PC-9 (cell line): ENCODE measurements at regions of chr22 and their contacts with region 1.

Region 1: DNA sequence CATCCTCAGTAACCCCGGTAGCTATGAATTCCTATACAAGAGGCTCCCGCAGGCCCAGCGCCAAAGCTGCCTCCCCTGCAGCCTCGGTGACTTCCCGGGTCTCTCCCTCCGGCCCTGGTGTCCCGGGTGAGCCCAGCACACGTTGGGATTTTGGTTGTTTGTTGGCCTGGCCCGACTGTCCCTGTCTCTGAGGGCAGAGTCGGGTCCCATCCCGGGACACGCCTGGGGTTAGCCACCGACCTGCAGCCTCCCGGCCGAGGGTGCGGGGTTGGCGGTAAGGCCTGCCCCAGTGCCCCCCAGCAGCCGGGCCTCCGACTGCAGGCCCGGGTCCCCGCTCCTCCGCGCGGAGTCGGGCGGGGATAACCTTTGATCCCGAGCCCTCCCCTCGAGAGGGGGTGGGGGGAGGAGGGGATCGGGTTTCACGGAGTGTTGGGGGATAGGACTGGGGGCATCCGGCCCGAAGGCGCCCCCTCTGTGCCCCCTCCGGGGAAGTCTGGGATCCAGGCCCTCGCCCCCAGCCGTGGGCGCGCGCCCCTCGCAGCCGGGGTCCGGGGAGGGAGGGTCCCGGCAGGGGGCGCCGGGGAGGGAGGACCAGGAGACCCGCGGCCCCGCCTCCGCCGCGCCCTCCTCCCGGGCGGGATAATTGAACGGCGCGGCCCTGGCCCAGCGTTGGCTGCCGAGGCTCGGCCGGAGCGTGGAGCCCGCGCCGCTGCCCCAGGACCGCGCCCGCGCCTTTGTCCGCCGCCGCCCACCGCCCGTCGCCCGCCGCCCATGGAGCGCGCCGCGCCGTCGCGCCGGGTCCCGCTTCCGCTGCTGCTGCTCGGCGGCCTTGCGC is at the start of gene FBLN1:
- DNase-seq: peak; percentile 45 to 65
- H3K4me3 ChIP-seq: peak within 1 kb of the TSS; percentile 64
- H3K27ac ChIP-seq: peak within 1 kb of the TSS; percentile 33
- H3K4me1 ChIP-seq: peaks cover 51% of the 10 kb centered on the region
- H3K27me3 ChIP-seq: no peaks in the 10 kb centered on the region
- CTCF ChIP-seq: peak; percentile 52
- total RNA-seq, gene FBLN1: 158 and 167 TPM in 2 replicates

Region 2: DNA sequence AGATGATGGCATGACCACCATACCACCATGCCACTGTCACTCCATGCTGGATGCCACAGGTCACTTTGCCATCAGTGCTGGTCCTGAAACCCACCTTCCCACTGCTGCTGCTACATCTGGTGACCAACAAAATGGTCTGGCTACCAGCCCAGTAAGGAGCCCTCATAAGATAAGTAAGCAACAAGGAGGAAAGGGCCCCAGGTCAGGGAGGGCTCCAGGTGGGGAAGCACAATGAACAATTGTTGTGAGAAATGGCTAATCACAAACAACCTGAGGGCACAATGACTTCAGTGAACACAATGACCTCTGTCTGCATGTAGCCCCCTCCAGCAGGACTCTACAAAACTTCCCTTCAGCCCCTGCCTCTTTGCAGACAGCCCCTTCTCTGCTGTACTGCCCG is 19.2 kb before region 1 on chr22:
- CTCF ChIA-PET with region 1: interaction called, 14 read pairs
- POLR2A ChIA-PET with region 1: no interaction called
- intact Hi-C with region 1: no loop called
- DNase-seq: no peak
- H3K4me3 ChIP-seq: no peak overlapping the region
- H3K27ac ChIP-seq: peak overlapping the region; percentile 86
- H3K4me1 ChIP-seq: peaks cover 56% of the 10 kb centered on the region
- H3K27me3 ChIP-seq: no peaks in the 10 kb centered on the region
- CTCF ChIP-seq: no peak

Region 3: GRCh38 chr22:45516923-45517675 is 14.7 kb after region 1 on chr22:
- CTCF ChIA-PET with region 1: interaction called, 5 read pairs
- POLR2A ChIA-PET with region 1: interaction called, 4 read pairs
- intact Hi-C with region 1: loop called (anchors 1 kb)
- DNase-seq: peak; percentile 93 to 97
- H3K4me3 ChIP-seq: no peak overlapping the region
- H3K27ac ChIP-seq: peak overlapping the region; percentile 77
- H3K4me1 ChIP-seq: peaks cover 74% of the 10 kb centered on the region
- H3K27me3 ChIP-seq: no peaks in the 10 kb centered on the region
- CTCF ChIP-seq: no peak

Region 4: GRCh38 chr22:45527456-45527855 is 25.0 kb after region 1 on chr22:
- CTCF ChIA-PET with region 1: no interaction called
- POLR2A ChIA-PET with region 1: no interaction called
- intact Hi-C with region 1: no loop called
- DNase-seq: no peak
- H3K4me3 ChIP-seq: no peak overlapping the region
- H3K27ac ChIP-seq: no peak overlapping the region
- H3K4me1 ChIP-seq: no peaks in the 10 kb centered on the region
- H3K27me3 ChIP-seq: no peaks in the 10 kb centered on the region
- CTCF ChIP-seq: no peak

Region 5: DNA sequence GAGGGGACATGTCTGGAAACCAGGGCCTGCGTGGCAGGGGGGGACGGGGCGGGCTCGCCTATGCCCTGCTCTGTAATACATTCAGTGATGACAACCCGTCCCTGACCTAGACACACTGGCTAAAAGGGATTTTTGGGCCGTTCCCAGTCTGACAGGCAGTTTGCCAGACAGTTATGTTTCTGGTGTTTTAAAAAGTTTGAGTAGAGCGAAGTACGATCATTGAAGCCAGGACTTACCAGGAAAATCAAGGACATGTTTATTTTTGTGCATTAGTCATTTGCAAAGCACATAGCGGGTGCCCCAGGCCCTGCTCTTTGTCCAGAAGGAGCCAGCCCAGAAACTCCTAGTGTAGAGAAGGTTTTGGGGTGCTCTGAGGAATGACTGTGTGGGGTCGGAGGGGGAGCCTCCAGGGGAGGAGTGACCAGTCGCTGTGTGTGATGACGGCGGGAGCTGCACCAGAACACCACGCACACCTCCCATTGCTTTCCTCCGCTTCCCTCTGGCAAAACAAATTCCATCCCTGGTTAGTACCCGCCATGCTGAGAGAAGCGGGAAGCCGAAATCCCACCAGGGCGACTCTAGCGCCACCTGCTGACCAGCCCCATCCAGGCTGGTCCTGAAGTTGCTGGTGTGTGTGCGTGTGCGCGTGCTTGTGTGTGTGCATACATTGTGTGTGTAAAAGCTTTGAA is 51.1 kb after region 1 on chr22:
- CTCF ChIA-PET with region 1: no interaction called
- POLR2A ChIA-PET with region 1: no interaction called
- intact Hi-C with region 1: loop called (anchors 2 kb)
- DNase-seq: peak; percentile 35 to 67
- H3K4me3 ChIP-seq: no peak overlapping the region
- H3K27ac ChIP-seq: no peak overlapping the region
- H3K4me1 ChIP-seq: peaks cover 35% of the 10 kb centered on the region
- H3K27me3 ChIP-seq: no peaks in the 10 kb centered on the region
- CTCF ChIP-seq: peak; percentile 76